GM12878 (cell line): ENCODE measurements at regions of chr22 and their contacts with region 1.

Region 1: DNA sequence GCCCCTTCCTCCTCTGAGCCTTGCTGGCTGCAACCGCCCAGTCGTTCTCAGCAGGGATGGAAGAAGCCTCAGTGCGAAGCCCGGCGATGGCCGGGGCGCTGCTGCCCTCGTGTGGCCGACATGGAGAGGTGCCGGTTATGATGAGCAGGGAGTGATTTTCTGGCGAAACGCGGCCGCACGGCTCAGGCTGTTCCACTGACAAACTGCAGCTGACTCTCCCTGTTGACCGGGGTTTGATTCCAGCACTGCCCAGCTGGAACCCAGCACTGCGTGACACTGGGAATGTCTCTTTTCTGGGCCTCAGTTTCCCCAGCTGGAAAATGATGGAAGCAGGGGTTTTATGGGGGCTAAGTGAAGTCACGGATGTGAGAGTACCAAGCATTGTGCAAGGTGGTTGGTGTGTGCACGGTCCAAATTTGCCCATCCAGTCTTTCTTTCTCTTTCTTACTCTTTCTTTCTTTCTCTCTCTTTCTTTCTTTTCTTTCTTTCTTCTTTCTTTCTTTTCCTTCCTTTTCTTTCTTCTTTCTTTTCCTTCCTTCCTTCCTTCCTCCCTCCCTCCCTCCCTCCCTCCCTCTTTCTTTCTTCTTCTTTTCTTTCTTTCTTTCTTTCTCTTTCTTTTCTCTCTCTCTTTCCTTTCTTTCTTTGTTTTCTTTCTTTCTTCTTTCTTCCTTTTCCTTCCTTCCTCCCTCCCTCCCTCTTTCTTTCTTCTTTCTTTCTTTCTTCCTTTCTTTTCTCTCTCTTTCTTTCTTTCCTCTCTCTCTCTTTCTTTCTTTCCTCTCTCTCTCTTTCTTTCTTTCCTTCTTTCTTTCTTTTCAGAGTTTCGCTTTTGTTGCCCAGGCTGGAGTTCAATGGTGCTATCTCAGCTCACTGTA is 25.8 kb upstream of the MPPED1 start:
- DNase-seq: no peak
- ATAC-seq: peak; percentile 97
- H3K4me3 ChIP-seq: no peak overlapping the region
- H3K27ac ChIP-seq: no peak overlapping the region
- H3K4me1 ChIP-seq: peaks cover 4% of the 10 kb centered on the region; the same call in 1 of the 2 replicates
- H3K27me3 ChIP-seq: peaks cover 0 to 3% of the 10 kb centered on the region in 2 experiments; a peak in 3 of 4 replicates
- CTCF ChIP-seq: peak; percentile 87 to 94 (median 92); a peak in 5 of 6 replicates
- EP300 ChIP-seq: no peak
- POLR2A ChIP-seq: no peak
- RAD21 ChIP-seq: peak; percentile 96

Region 2: DNA sequence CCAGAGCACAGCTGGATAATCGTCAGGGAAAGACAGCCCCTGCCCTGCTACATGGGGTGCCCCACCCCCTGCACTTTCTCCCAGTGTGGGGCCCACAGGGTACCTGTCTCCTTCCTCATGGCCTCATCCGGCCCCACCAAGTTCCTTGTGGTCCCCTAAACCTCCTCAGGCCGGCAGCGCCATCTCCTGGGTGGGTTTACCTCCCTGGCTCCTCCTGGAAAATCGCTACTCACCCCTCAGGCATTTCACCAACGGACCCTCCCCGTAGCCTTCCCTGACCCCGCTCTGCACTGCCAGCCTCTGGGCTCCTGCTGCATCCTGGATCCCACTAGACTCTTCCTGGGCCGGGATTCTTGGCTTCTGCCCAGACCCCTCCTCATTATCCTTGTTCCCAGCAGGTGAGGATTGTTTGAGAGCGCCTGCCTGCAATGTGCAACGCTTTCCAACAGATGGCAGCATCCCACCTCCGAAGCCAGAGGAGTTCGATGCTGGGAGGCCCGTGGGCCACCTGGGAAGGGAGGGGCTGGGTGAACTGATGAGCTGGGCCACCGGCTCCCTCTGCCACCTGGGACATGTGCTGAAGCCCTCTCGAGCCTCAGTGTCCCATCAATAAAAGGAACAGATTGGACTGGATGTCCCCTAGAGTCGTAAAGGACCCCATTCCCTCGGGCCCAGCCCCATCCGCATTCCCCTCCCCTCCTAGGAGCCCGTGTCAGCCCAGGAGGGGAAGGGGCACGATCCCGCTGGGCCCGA is 154.9 kb before region 1 on chr22:
- CTCF ChIA-PET with region 1: interaction called, 30 read pairs
- POLR2A ChIA-PET with region 1: no interaction called
- RAD21 ChIA-PET with region 1: interaction called, 3 read pairs
- SMC1A ChIA-PET with region 1: no interaction called
- in situ Hi-C with region 1: loop called (anchors 5 kb)
- intact Hi-C with region 1: loop called (anchors 1 kb)
- DNase-seq: no peak
- ATAC-seq: peak; percentile 84
- H3K4me3 ChIP-seq: no peak overlapping the region
- H3K27ac ChIP-seq: no peak overlapping the region
- H3K4me1 ChIP-seq: no peaks in the 10 kb centered on the region
- H3K27me3 ChIP-seq: peaks cover 5 to 6% of the 10 kb centered on the region in 2 experiments; a peak in 3 of 4 replicates
- CTCF ChIP-seq: peak; percentile 92 to 97 (median 94)
- EP300 ChIP-seq: no peak
- POLR2A ChIP-seq: no peak
- RAD21 ChIP-seq: peak; percentile 97

Region 3: GRCh38 chr22:43253839-43254238 is 132.2 kb before region 1 on chr22:
- CTCF ChIA-PET with region 1: no interaction called
- POLR2A ChIA-PET with region 1: no interaction called
- RAD21 ChIA-PET with region 1: no interaction called
- SMC1A ChIA-PET with region 1: no interaction called
- in situ Hi-C with region 1: no loop called
- intact Hi-C with region 1: no loop called
- DNase-seq: no peak
- ATAC-seq: no peak
- H3K4me3 ChIP-seq: no peak overlapping the region
- H3K27ac ChIP-seq: no peak overlapping the region
- H3K4me1 ChIP-seq: peaks cover 8% of the 10 kb centered on the region; the same call in 1 of the 2 replicates
- H3K27me3 ChIP-seq: peaks cover 0 to 9% of the 10 kb centered on the region in 2 experiments; a peak in 3 of 4 replicates
- CTCF ChIP-seq: no peak
- EP300 ChIP-seq: no peak
- POLR2A ChIP-seq: no peak
- RAD21 ChIP-seq: no peak

Region 4: DNA sequence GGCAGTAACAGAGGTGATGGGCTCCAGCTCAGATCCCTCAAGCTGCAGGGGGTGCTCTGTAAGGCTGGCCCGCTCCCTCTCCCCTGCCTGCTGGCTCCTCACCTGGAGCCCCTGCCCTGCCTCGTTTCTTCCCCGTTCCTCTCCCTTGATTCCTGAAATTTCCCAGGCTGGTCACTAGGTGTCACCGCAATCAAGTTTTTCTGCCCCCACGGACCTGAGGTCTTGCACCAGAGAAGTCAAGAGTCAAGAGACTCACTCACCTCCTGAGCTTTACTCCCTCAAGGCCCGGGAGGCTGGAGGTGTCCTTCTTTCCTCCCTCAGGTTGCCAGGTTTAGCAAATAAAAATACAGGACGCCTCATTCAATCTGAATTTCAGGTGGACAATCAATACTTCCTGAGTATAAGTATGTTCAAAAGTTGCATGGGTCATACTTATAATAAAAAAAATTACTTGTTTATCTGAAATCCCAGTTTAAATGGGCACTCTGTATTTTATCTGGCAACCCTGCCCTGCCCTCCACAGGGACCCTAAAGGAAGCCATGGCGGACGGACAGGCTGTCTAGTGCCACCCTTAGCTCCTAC is 112.0 kb before region 1 on chr22:
- CTCF ChIA-PET with region 1: interaction called, 72 read pairs
- POLR2A ChIA-PET with region 1: no interaction called
- RAD21 ChIA-PET with region 1: interaction called, 10 read pairs
- SMC1A ChIA-PET with region 1: interaction called, 12 read pairs
- in situ Hi-C with region 1: loop called (anchors 5 kb)
- intact Hi-C with region 1: loop called (anchors 1 kb)
- DNase-seq: peak; percentile 13
- ATAC-seq: peak; percentile 79
- H3K4me3 ChIP-seq: no peak overlapping the region
- H3K27ac ChIP-seq: no peak overlapping the region
- H3K4me1 ChIP-seq: peaks cover 7% of the 10 kb centered on the region
- H3K27me3 ChIP-seq: no peaks in the 10 kb centered on the region
- CTCF ChIP-seq: peak; percentile 68 to 81 (median 70)
- EP300 ChIP-seq: no peak
- POLR2A ChIP-seq: no peak
- RAD21 ChIP-seq: peak; percentile 93

Region 5: GRCh38 chr22:43481568-43482317 is 95.7 kb after region 1 on chr22:
- CTCF ChIA-PET with region 1: no interaction called
- POLR2A ChIA-PET with region 1: no interaction called
- RAD21 ChIA-PET with region 1: no interaction called
- SMC1A ChIA-PET with region 1: no interaction called
- in situ Hi-C with region 1: no loop called
- intact Hi-C with region 1: loop called (anchors 2 kb)
- DNase-seq: no peak
- ATAC-seq: peak; percentile 34; the same call in 1 of the 3 replicates
- H3K4me3 ChIP-seq: no peak overlapping the region
- H3K27ac ChIP-seq: no peak overlapping the region
- H3K4me1 ChIP-seq: 0 out of 2 replicates have a peak, but pooled peaks cover 4% of the 10 kb centered on the region
- H3K27me3 ChIP-seq: no peaks in the 10 kb centered on the region; a peak in 1 of 4 replicates
- CTCF ChIP-seq: peak; percentile 10 to 27 (median 26); a peak in 2 of 6 replicates
- EP300 ChIP-seq: no peak
- POLR2A ChIP-seq: no peak
- RAD21 ChIP-seq: 0 out of 2 replicates have a peak, but pooled peaks have one; percentile 17

Region 6: GRCh38 chr22:43826142-43827002 is 440.4 kb after region 1 on chr22:
- CTCF ChIA-PET with region 1: interaction called, 3 read pairs
- POLR2A ChIA-PET with region 1: no interaction called
- RAD21 ChIA-PET with region 1: no interaction called
- SMC1A ChIA-PET with region 1: interaction called, 3 read pairs
- in situ Hi-C with region 1: loop called (anchors 10 kb)
- intact Hi-C with region 1: loop called (anchors 2 kb)
- DNase-seq: no peak
- ATAC-seq: peak; percentile 34; the same call in 1 of the 3 replicates
- H3K4me3 ChIP-seq: no peak overlapping the region
- H3K27ac ChIP-seq: no peak overlapping the region
- H3K4me1 ChIP-seq: no peaks in the 10 kb centered on the region
- H3K27me3 ChIP-seq: no peaks in the 10 kb centered on the region; a peak in 1 of 4 replicates
- CTCF ChIP-seq: peak; percentile 25 to 56 (median 37); a peak in 4 of 6 replicates
- EP300 ChIP-seq: no peak
- POLR2A ChIP-seq: no peak
- RAD21 ChIP-seq: peak; percentile 71

Region 7: GRCh38 chr22:43884600-43885325 is 498.8 kb after region 1 on chr22:
- CTCF ChIA-PET with region 1: interaction called, 4 read pairs
- POLR2A ChIA-PET with region 1: no interaction called
- RAD21 ChIA-PET with region 1: no interaction called
- SMC1A ChIA-PET with region 1: no interaction called
- in situ Hi-C with region 1: no loop called
- intact Hi-C with region 1: loop called (anchors 2 kb)
- DNase-seq: peak; percentile 33
- ATAC-seq: peak; percentile 82
- H3K4me3 ChIP-seq: no peak overlapping the region
- H3K27ac ChIP-seq: no peak overlapping the region
- H3K4me1 ChIP-seq: peaks cover 9% of the 10 kb centered on the region
- H3K27me3 ChIP-seq: peaks cover 0 to 5% of the 10 kb centered on the region in 2 experiments
- CTCF ChIP-seq: peak; percentile 66 to 92 (median 80)
- EP300 ChIP-seq: peak in 1 of 2 experiments; percentile 10; a peak in 1 of 4 replicates
- POLR2A ChIP-seq: no peak
- RAD21 ChIP-seq: peak; percentile 60

Region 8: DNA sequence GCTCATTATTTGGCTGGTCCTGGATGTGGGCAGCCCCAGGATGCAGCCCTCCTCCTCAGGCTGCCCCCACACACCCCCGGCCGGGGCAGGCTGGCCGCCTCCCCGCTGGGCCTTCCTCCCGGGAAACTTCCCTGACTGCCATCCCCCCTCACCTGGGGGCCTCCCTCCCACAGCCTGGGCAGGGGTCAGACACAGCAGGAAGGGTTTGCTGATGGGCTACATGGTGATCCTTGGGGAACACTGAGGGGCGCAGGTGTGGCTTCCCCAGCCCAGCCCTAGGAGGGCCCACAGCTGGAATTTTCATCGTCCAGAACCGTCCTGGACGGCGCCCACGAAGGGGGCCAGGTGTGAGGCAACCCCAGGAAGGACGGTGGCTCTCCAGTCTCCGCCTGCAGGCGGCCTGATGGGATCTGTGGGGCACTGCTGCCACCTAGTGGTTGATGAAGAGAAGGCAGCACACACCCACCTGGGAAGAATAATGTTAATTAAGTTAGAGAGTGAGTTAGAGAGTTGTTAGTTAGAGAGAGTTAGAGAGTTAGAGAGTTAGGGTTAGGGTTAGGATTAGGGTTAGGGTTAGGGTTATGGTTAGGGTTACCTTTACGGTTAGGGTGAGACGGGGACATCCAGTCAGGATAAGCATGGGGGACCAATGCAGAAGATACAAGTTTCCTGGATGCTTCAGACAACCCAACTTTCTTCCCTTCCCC is 1240.1 kb after region 1 on chr22:
- CTCF ChIA-PET with region 1: no interaction called
- POLR2A ChIA-PET with region 1: no interaction called
- RAD21 ChIA-PET with region 1: no interaction called
- SMC1A ChIA-PET with region 1: no interaction called
- in situ Hi-C with region 1: loop called (anchors 10 kb)
- intact Hi-C with region 1: loop called (anchors 1 kb)
- DNase-seq: peak; percentile 15
- ATAC-seq: peak; percentile 94
- H3K4me3 ChIP-seq: no peak overlapping the region
- H3K27ac ChIP-seq: no peak overlapping the region
- H3K4me1 ChIP-seq: no peaks in the 10 kb centered on the region
- H3K27me3 ChIP-seq: no peaks in the 10 kb centered on the region
- CTCF ChIP-seq: peak; percentile 89 to 99 (median 92)
- EP300 ChIP-seq: no peak
- POLR2A ChIP-seq: no peak
- RAD21 ChIP-seq: peak; percentile 97